ENCODE measurements at regions of chr11 and their contacts with region 1.

Region 1: DNA sequence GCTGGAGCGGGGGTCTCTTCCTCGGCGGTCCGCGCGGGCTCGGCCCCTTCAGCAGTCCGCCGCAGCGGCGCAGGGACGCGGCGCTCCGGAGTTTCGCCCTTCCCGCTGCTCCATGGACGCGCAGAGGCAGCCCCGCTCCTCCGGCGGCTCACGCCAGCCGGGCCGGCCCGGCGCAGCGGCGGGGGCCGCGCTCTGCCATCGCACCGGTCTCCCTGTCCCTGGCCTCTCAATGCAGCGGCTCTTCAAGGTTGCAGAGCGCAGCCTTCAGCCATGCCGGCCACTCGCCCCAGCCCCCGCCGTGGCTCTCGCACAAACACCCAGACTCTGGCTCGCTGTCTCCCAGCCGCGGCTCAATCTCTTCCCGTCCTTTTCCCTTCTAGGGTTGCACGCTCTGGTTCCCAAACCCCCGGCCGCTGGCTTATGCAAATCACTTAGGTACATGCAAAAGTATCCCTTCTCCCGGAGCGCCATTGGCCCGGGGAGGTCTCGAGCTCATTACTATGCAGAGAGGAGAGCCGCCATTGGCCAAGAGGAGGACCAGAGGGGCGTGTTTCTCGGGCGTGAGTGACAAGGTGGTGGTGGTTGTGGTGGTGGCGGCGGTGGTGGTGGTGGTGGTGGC is at the start of gene LGR4:
- DNase-seq: peak; percentile 100
- H3K4me3 ChIP-seq: peak within 1 kb of the TSS; percentile 72
- H3K27ac ChIP-seq: peak within 1 kb of the TSS; percentile 81
- H3K4me1 ChIP-seq: peaks cover 32% of the 10 kb centered on the region
- H3K27me3 ChIP-seq: no peaks in the 10 kb centered on the region
- CTCF ChIP-seq: no peak
- total RNA-seq, gene LGR4: 24.7 and 27.9 TPM in 2 replicates

Region 2: DNA sequence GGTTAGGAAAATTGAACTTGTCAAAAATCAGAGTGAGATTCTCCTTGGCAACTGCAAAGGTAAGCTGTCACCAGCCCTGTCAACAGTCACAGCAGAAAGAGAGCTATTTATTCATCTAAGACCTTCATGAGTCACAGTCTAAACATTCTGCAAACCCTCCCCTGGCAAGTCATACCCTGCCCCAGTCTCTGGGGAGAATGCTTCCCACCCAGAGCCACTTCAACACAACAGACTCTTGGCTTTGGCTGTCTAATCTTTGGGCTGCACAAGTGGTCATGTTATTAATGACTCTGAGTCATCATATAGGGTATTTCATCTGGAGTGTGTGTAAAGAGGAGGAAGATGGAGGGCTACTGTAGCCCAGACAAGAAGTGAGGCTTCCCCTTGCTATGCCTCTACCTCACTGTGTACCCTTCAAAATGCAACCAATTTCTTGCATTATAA is 262.9 kb before region 1 on chr11:
- CTCF ChIA-PET with region 1: no interaction called
- POLR2A ChIA-PET with region 1: interaction called, 19 read pairs
- intact Hi-C with region 1: no loop called
- DNase-seq: peak; percentile 100
- H3K4me3 ChIP-seq: no peak overlapping the region
- H3K27ac ChIP-seq: no peak overlapping the region
- H3K4me1 ChIP-seq: peaks cover 76% of the 10 kb centered on the region
- H3K27me3 ChIP-seq: no peaks in the 10 kb centered on the region
- CTCF ChIP-seq: no peak

Region 3: DNA sequence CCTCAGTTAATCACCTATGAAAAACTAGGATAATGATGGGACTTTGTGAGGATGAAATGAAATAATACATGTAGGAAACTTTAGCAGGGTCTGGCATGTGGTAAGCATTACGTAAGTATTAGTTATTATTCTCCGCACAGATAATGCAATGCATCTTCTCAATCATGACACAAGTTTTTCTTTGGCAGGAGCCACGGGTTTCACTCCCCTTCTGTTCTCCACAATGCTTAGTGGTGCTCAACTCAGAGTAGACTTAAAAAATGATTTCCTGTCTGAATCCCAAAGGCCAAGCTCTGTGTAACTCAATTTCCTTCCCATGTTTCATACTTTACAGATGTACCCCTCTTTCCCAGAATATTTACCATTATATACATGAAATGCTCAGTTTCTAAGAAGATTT is 192.4 kb before region 1 on chr11:
- CTCF ChIA-PET with region 1: interaction called, 17 read pairs
- POLR2A ChIA-PET with region 1: no interaction called
- intact Hi-C with region 1: no loop called
- DNase-seq: peak; percentile 83
- H3K4me3 ChIP-seq: no peak overlapping the region
- H3K27ac ChIP-seq: no peak overlapping the region
- H3K4me1 ChIP-seq: peaks cover 29% of the 10 kb centered on the region
- H3K27me3 ChIP-seq: no peaks in the 10 kb centered on the region
- CTCF ChIP-seq: no peak

Region 4: GRCh38 chr11:27319072-27319471 is 153.4 kb before region 1 on chr11:
- CTCF ChIA-PET with region 1: interaction called, 10 read pairs
- POLR2A ChIA-PET with region 1: no interaction called
- intact Hi-C with region 1: no loop called
- DNase-seq: no peak
- H3K4me3 ChIP-seq: no peak overlapping the region
- H3K27ac ChIP-seq: no peak overlapping the region
- H3K4me1 ChIP-seq: peaks cover 6% of the 10 kb centered on the region
- H3K27me3 ChIP-seq: no peaks in the 10 kb centered on the region
- CTCF ChIP-seq: no peak

Region 5: DNA sequence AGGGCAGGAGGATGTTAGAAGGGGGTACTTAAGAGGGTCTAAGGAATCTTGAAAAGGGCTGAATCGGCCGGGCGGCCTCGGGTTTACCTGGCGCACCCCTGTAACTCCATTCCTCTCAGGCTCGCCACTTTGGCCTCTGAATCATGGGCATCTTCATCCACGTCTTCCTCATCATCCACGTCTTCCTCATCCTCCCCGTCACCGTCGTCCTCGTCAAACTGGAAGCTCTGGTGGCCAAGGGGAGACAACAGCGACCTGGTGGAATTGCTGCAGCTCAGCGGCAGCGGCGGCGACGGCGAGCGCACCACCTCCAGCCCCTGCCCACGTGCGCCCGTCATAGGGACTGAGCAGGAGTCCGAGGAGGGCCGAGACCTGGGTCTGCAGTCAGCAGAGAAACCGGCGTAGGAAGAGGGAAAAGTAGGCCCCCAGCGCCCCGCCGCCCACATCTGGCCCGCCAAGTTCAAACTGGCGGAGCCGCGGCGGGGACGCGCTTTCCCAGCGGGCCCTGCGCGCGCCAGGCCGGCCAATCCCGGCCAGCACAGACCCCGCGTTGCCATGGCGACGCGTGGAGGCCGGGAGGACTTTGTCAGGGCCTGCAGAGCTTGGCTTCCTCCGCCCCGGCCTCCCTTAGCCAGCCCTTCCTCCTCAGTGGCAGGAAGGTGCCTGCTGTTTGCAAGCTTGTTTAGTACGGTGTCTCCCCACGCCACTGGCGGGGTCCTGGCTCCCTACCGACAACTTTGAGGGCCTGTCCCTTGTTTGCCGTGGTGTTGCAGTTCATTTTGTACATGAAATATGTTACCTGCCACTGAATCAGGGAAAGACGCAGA is 109.5 kb before region 1 on chr11 and contains the start of gene CCDC34:
- CTCF ChIA-PET with region 1: interaction called, 4 read pairs
- POLR2A ChIA-PET with region 1: no interaction called
- intact Hi-C with region 1: loop called (anchors 1 kb)
- DNase-seq: peak; percentile 100
- H3K4me3 ChIP-seq: peak within 1 kb of the TSS; percentile 64
- H3K27ac ChIP-seq: peak within 1 kb of the TSS; percentile 74
- H3K4me1 ChIP-seq: peaks cover 29% of the 10 kb centered on the region
- H3K27me3 ChIP-seq: no peaks in the 10 kb centered on the region
- CTCF ChIP-seq: 0 out of 2 replicates have a peak, but pooled peaks have one; percentile 19
- total RNA-seq, gene CCDC34: 101 and 105 TPM in 2 replicates

Region 6: DNA sequence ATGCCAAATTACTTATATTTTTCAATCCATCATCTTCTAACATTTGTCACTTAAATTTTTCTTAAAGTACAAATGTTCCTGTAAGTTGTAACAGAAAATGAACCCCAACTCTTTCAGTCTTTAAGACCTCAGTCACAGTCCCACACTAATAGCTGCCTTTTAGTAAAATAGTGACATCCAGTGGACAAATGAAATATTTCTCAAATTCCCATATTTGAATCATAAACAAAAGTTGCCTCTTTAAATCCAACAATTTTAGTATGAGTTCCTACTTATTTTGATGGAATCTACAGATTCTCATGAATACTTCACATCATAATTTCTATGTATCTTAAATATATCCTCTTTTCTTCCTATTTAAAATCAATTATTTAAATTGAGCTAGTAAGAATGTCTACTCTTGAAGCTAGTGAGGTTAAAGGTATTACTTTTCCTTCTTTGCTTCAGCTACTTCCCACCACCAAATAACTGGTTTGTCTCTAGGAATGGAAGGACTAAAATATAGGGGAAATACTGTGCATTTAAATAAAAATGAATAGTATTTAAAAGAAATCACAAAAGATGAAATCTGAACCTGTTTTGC is 24.9 kb after region 1 on chr11:
- CTCF ChIA-PET with region 1: interaction called, 13 read pairs
- POLR2A ChIA-PET with region 1: no interaction called
- intact Hi-C with region 1: no loop called
- DNase-seq: peak; percentile 84
- H3K4me3 ChIP-seq: no peak overlapping the region
- H3K27ac ChIP-seq: no peak overlapping the region
- H3K4me1 ChIP-seq: peaks cover 15% of the 10 kb centered on the region
- H3K27me3 ChIP-seq: no peaks in the 10 kb centered on the region
- CTCF ChIP-seq: peak; percentile 95

Region 7: DNA sequence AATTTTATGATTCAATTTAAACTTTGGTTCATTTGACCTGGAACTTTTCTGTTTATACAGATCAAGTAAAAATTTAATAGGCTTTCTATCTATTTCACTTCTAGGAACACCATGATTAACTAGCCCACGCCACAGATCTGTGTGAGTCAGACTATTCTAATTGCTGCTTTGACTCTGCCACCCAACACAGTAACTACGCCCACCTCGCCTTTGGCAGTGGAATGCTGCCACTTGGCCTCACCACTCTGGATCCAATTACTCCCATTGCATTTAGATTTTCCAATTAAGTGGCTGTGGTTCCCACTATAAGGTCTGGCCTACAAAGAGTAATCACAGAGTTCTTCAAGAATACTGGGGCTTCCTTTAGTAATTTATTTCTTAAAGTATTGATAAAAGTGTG is 80.7 kb after region 1 on chr11:
- CTCF ChIA-PET with region 1: no interaction called
- POLR2A ChIA-PET with region 1: interaction called, 19 read pairs
- intact Hi-C with region 1: no loop called
- DNase-seq: peak; percentile 76
- H3K4me3 ChIP-seq: no peak overlapping the region
- H3K27ac ChIP-seq: no peak overlapping the region
- H3K4me1 ChIP-seq: no peaks in the 10 kb centered on the region
- H3K27me3 ChIP-seq: no peaks in the 10 kb centered on the region
- CTCF ChIP-seq: no peak